ENCODE measurements at regions of chrX and their contacts with region 1.

Region 1: DNA sequence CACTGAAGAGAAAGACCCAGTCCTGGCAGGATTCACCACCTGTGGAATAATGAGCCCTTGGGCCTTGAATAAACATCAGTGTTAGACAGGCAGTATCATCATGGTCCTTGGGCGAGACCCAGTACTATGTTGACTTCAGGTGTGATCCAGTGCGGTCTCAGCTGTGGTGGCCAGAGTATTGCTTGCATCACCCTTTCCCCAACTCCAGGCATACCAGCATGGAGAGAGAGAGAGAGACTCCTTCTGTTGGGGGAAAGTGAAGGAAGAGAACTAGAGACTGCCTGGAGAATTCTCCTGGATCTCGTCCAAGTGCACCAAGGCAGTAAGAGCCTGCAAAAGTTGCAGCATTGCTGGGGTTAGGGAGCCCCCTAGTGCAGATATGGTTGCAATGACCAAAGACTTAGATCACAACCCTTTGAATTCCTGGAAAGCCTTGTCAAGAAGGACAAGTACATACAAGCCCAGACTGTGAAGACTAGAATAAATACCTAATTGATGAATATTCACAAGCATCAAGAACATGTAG is 61.1 kb upstream of the VAMP7 start:
- DNase-seq: peak; percentile 28 to 80 (median 44)
- ATAC-seq: peak; percentile 86
- H3K4me3 ChIP-seq: no peak overlapping the region
- H3K27ac ChIP-seq: no peak overlapping the region
- H3K4me1 ChIP-seq: no peaks in the 10 kb centered on the region
- H3K27me3 ChIP-seq: no peaks in the 10 kb centered on the region
- CTCF ChIP-seq: peak; percentile 71 to 83 (median 77)
- EP300 ChIP-seq: no peak
- POLR2A ChIP-seq: no peak
- RAD21 ChIP-seq: peak; percentile 83 to 92

Region 2: DNA sequence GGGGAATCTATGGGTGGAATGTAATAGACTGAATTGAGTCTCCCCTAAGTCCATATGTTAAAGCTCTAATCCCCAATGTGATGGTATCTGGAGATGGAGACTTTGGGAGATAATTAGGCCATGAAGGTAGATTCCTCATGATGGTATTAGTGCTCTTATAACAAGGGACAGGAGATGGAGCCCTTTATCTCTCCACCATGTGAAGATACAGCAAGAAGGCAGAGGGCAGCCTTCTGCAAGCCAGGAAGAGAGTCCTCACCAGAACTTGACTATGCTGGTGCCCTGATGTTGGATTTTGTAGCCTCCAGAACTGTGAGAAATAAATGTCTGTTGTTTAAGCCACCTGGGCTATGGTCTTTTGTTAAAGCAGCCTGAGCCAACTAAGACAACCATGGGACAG is 285.2 kb before region 1 on chrX:
- CTCF ChIA-PET with region 1: no interaction called
- POLR2A ChIA-PET with region 1: no interaction called
- in situ Hi-C with region 1: no loop called
- intact Hi-C with region 1: loop called (anchors 2 kb)
- DNase-seq: peak in 1 of 4 experiments; percentile 18
- ATAC-seq: peak; percentile 67; the same call in 2 of the 3 replicates
- H3K4me3 ChIP-seq: no peak overlapping the region
- H3K27ac ChIP-seq: no peak overlapping the region
- H3K4me1 ChIP-seq: no peaks in the 10 kb centered on the region; a peak in 2 of 5 replicates
- H3K27me3 ChIP-seq: no peaks in the 10 kb centered on the region
- CTCF ChIP-seq: peak in 2 of 3 experiments; percentile 55 to 80; a peak in 4 of 6 replicates
- EP300 ChIP-seq: no peak
- POLR2A ChIP-seq: no peak
- RAD21 ChIP-seq: peak in 1 of 2 experiments; percentile 61; a peak in 2 of 4 replicates

Region 3: GRCh38 chrX:155841232-155841631 is 21.2 kb after region 1 on chrX:
- CTCF ChIA-PET with region 1: no interaction called
- POLR2A ChIA-PET with region 1: no interaction called
- in situ Hi-C with region 1: no loop called
- intact Hi-C with region 1: no loop called
- DNase-seq: peak in 1 of 4 experiments; percentile 3
- ATAC-seq: no peak
- H3K4me3 ChIP-seq: no peak overlapping the region
- H3K27ac ChIP-seq: no peak overlapping the region
- H3K4me1 ChIP-seq: no peaks in the 10 kb centered on the region
- H3K27me3 ChIP-seq: no peaks in the 10 kb centered on the region
- CTCF ChIP-seq: no peak
- EP300 ChIP-seq: no peak
- POLR2A ChIP-seq: no peak
- RAD21 ChIP-seq: no peak

Measured in K562 (cell line).